ENCODE measurements at regions of chr15 and their contacts with region 1.

Region 1: GRCh38 chr15:60326824-60327654 is 70.7 kb downstream of the ANXA2 start:
- DNase-seq: no peak
- ATAC-seq: no peak

Region 2: GRCh38 chr15:59688841-59689625 is 638.0 kb before region 1 on chr15 and contains the start of gene BNIP2:
- intact Hi-C with region 1: loop called (anchors 10 kb)
- DNase-seq: peak; percentile 100
- ATAC-seq: peak; percentile 98
- total RNA-seq, gene BNIP2: 73.2 TPM

Region 3: GRCh38 chr15:59917504-59918157 is 409.4 kb before region 1 on chr15:
- intact Hi-C with region 1: loop called (anchors 5 kb)
- DNase-seq: no peak
- ATAC-seq: peak; percentile 52

Region 4: DNA sequence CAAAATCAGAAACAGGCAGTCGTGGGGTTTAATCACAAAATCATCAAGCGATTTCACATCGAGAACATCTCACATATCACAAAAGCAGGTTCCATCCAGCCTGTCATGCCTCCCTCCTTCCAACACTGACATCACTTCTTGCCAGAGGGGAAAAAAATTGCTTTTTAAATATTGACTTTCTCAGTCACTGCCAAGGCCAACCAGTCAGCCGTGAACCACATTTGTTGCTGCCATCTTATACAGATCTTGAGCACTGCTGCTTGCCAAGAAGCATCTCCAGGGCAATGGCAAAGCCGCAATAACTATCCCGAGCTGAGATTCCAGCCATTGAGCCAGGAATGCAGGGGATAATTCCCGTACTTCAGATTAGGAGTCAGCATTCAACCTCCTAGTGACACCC is 103.9 kb before region 1 on chr15:
- intact Hi-C with region 1: no loop called
- DNase-seq: no peak
- ATAC-seq: no peak

Region 5: GRCh38 chr15:60442031-60442650 is 115.1 kb after region 1 on chr15:
- intact Hi-C with region 1: no loop called
- DNase-seq: no peak
- ATAC-seq: no peak